Activated naive CD4-positive, alpha-beta T cell treated with anti-CD3 and anti-CD28 coated beads for 36 hours (primary cell): ENCODE measurements at regions of chr1 and their contacts with region 1.

Region 1: DNA sequence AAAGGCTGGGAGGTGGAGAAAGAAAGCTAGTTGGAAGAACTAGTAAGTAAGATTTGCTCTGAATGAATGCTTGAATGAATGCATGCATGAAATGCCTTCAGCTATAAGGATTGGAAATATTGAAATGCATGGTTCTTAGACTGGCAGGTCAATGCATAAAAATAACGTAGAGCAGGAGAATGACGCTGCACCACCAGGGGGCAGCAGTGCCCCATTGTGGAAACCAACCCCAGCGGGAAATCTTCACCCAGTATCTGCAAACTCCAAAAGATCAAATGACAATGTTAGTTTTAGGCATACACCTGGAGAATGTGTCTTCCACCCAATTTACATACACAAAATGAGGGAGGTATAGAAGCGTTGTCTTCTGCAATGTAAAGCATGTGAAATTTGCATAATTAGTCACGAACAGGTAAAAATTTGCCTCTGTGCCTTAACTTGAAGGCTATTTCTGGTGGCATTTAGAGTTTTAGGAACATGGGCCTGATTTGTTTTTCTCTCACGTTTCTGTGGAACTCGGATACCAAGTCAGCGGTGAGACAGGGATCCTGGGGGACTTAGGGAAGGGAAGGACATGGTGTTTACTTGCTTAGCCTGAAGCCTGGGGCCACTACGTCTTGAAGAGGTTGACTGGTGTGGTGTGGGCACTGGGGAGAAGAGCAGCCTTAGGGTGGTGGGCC is 78.6 kb downstream of the HHAT start:
- DNase-seq: peak; percentile 86
- H3K4me3 Mint-ChIP-seq: no peak overlapping the region
- H3K27ac Mint-ChIP-seq: no peak overlapping the region
- H3K4me1 Mint-ChIP-seq: peaks cover 5% of the 10 kb centered on the region
- H3K27me3 Mint-ChIP-seq: peaks cover 2% of the 10 kb centered on the region

Region 2: DNA sequence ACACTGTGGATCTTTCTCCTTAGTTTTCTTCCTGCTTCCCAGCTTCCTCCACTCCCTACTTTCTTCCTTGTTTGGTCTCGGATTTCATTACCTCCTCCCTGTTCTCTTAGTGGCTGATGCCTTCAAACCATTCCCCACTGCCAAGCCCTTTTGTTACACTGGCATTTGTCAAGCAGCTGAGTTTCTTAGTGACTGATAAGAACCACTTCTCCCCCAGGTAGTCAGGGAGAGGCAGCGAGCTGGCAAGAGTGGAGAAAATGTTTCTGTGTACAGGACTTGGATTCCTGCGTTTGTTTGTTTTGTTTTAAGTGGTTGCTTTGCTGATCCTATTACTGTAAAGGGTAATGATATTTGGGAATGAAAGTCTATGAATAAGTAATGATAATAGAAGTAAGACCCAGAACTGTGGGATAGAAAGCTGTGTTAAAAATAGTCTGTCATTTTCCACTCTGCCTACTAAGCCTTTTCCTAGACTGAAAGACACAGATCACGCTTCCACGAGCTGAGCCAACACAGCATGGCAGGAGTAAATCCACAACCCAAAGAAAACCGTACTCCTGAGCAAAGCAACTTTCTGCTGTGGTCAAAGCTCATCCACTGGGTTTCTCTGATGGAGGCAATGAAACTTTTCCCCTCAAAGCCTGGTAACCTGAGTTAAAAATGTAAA is 184.9 kb before region 1 on chr1:
- CTCF ChIA-PET with region 1: no interaction called
- intact Hi-C with region 1: no loop called
- DNase-seq: no peak
- H3K4me3 Mint-ChIP-seq: no peak overlapping the region
- H3K27ac Mint-ChIP-seq: no peak overlapping the region
- H3K4me1 Mint-ChIP-seq: no peaks in the 10 kb centered on the region
- H3K27me3 Mint-ChIP-seq: peaks cover 5% of the 10 kb centered on the region

Region 3: DNA sequence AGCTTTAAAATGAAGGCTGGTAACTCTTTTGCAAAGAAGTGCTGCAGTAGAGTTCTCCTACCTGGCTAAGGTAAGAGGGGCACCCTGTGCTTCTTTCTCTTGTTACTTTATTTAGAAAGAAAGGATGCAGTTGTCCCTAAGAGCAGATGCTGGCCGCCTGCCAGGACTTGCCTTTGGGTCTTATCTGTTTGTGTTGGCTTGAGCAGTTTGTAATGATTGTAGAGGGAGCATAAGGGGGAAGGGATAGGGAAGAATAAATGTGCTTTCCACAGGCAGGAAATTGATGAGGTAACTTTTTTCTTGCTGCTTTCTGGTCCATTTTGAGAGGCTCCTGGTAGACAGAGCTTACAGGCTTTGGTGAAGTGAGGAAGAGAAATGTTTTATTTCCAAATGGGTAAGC is 151.0 kb after region 1 on chr1:
- CTCF ChIA-PET with region 1: no interaction called
- intact Hi-C with region 1: no loop called
- DNase-seq: no peak
- H3K4me3 Mint-ChIP-seq: no peak overlapping the region
- H3K27ac Mint-ChIP-seq: no peak overlapping the region
- H3K4me1 Mint-ChIP-seq: no peaks in the 10 kb centered on the region
- H3K27me3 Mint-ChIP-seq: no peaks in the 10 kb centered on the region

Region 4: GRCh38 chr1:210800756-210801155 is 393.4 kb after region 1 on chr1:
- CTCF ChIA-PET with region 1: no interaction called
- intact Hi-C with region 1: loop called (anchors 5 kb)
- DNase-seq: no peak
- H3K4me3 Mint-ChIP-seq: no peak overlapping the region
- H3K27ac Mint-ChIP-seq: no peak overlapping the region
- H3K4me1 Mint-ChIP-seq: no peaks in the 10 kb centered on the region
- H3K27me3 Mint-ChIP-seq: peaks cover 10% of the 10 kb centered on the region